ENCODE measurements at regions of chr16 and their contacts with region 1.

Region 1: DNA sequence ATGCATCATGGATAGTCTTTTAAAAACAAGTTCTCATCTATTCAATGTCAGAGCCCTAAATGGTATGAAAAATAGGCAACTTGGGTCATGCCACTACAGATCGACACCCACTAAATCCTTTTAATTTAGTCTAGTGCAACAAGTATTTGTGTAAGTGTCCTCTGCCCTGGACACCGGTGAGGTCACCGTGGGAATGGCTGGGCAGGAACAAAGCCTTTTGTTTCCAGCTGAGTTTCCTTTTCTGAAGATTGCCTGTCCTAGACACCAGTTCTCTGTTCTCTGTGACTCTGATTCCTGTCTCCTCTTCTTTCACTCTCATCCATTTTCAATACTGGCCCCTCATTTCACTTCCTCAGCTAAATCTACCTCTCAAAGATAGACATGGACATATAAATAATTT is 446.5 kb downstream of the MAF start:
- DNase-seq: no peak
- ATAC-seq: no peak
- H3K4me3 Mint-ChIP-seq: no peak overlapping the region
- H3K27ac Mint-ChIP-seq: no peak overlapping the region
- H3K4me1 Mint-ChIP-seq: peaks cover 26% of the 10 kb centered on the region
- H3K27me3 Mint-ChIP-seq: no peaks in the 10 kb centered on the region; the same call in 1 of the 2 replicates
- CTCF ChIP-seq: no peak

Region 2: GRCh38 chr16:79253100-79253631 is 99.1 kb after region 1 on chr16:
- CTCF ChIA-PET with region 1: no interaction called
- POLR2A ChIA-PET with region 1: interaction called, 13 read pairs
- DNase-seq: no peak
- ATAC-seq: no peak
- H3K4me3 Mint-ChIP-seq: no peak overlapping the region
- H3K27ac Mint-ChIP-seq: no peak overlapping the region
- H3K4me1 Mint-ChIP-seq: peaks cover 5% of the 10 kb centered on the region; the same call in 1 of the 2 replicates
- H3K27me3 Mint-ChIP-seq: no peaks in the 10 kb centered on the region
- CTCF ChIP-seq: no peak

Measured in WTC11 (cell line).